PC-9 (cell line): ENCODE measurements at regions of chr1 and their contacts with region 1.

Region 1: GRCh38 chr1:31564134-31564989 is 12.0 kb upstream of the TINAGL1 start:
- DNase-seq: peak; percentile 64 to 67
- H3K4me3 ChIP-seq: no peak overlapping the region
- H3K27ac ChIP-seq: peak overlapping the region; percentile 93
- H3K4me1 ChIP-seq: peaks cover 44% of the 10 kb centered on the region
- H3K27me3 ChIP-seq: no peaks in the 10 kb centered on the region
- CTCF ChIP-seq: peak; percentile 100

Region 2: GRCh38 chr1:31576201-31576669 is 11.9 kb after region 1 on chr1 and contains the start of gene TINAGL1:
- CTCF ChIA-PET with region 1: no interaction called
- POLR2A ChIA-PET with region 1: interaction called, 5 read pairs
- intact Hi-C with region 1: loop called (anchors 1 kb)
- DNase-seq: peak; percentile 89 to 98
- H3K4me3 ChIP-seq: peak within 1 kb of the TSS; percentile 70
- H3K27ac ChIP-seq: peak within 1 kb of the TSS; percentile 91
- H3K4me1 ChIP-seq: peaks cover 72% of the 10 kb centered on the region
- H3K27me3 ChIP-seq: no peaks in the 10 kb centered on the region
- CTCF ChIP-seq: no peak
- total RNA-seq, gene TINAGL1: 162 and 191 TPM in 2 replicates

Region 3: GRCh38 chr1:31587720-31588394 is 23.5 kb after region 1 on chr1:
- CTCF ChIA-PET with region 1: interaction called, 3 read pairs
- POLR2A ChIA-PET with region 1: interaction called, 3 read pairs
- intact Hi-C with region 1: loop called (anchors 1 kb)
- DNase-seq: peak; percentile 84 to 95
- H3K4me3 ChIP-seq: peak overlapping the region; percentile 52; the same call in 1 of the 2 replicates
- H3K27ac ChIP-seq: peak overlapping the region; percentile 92
- H3K4me1 ChIP-seq: peaks cover 97% of the 10 kb centered on the region
- H3K27me3 ChIP-seq: no peaks in the 10 kb centered on the region
- CTCF ChIP-seq: peak; percentile 90

Region 4: GRCh38 chr1:31593770-31594632 is 29.6 kb after region 1 on chr1:
- CTCF ChIA-PET with region 1: interaction called, 3 read pairs
- POLR2A ChIA-PET with region 1: interaction called, 15 read pairs
- intact Hi-C with region 1: loop called (anchors 1 kb)
- DNase-seq: peak; percentile 81 to 85
- H3K4me3 ChIP-seq: no peak overlapping the region
- H3K27ac ChIP-seq: no peak overlapping the region
- H3K4me1 ChIP-seq: peaks cover 41% of the 10 kb centered on the region
- H3K27me3 ChIP-seq: no peaks in the 10 kb centered on the region
- CTCF ChIP-seq: peak; percentile 99

Region 5: GRCh38 chr1:31617917-31618660 is 53.7 kb after region 1 on chr1:
- CTCF ChIA-PET with region 1: no interaction called
- POLR2A ChIA-PET with region 1: no interaction called
- intact Hi-C with region 1: loop called (anchors 1 kb)
- DNase-seq: peak in 1 of 2 experiments; percentile 43
- H3K4me3 ChIP-seq: peak overlapping the region; percentile 75
- H3K27ac ChIP-seq: no peak overlapping the region
- H3K4me1 ChIP-seq: no peaks in the 10 kb centered on the region
- H3K27me3 ChIP-seq: no peaks in the 10 kb centered on the region
- CTCF ChIP-seq: peak; percentile 98

Region 6: DNA sequence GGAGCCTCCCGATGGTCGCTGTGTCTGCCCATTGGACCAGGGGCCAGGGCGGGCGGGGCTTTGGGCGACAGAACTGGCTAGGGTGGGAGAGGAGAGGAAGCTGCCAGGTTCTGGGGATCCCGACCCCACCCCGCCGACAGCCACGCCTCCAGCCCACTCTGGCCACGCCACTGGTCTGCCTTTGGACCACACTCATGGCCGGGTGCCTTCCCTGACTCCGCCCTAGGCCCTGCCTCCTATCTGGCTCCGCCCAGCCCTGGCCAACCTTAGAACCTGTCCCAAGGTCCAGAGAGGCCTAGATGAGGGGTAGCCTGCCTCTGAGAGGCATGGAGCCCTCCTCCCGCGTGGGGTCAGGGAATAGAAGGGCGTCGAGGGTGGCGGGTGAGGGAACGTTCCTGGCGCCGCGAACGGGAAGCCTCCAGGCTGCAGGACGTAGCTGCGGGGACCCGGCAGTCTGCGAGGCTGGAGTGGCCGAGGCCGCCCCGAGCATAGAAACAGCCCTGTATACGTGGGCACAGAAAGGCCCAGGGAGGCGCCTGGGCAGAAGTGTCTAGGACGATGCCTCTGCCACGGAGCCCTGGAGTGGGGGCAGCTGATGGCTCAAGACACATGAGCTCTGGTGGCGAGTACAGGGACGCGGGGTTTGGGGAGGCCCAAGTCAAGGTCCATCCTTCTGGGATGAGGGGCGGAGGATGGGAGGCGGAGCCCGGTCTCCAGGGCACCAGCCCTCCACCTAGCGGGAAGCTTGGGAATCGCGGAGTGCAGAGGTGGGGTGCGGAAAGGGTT is 150.9 kb after region 1 on chr1:
- CTCF ChIA-PET with region 1: no interaction called
- POLR2A ChIA-PET with region 1: no interaction called
- intact Hi-C with region 1: loop called (anchors 10 kb)
- DNase-seq: peak; percentile 90 to 93
- H3K4me3 ChIP-seq: peak overlapping the region; percentile 59
- H3K27ac ChIP-seq: no peak overlapping the region
- H3K4me1 ChIP-seq: peaks cover 45% of the 10 kb centered on the region
- H3K27me3 ChIP-seq: peaks cover 7% of the 10 kb centered on the region; the same call in 1 of the 2 replicates
- CTCF ChIP-seq: peak; percentile 98

Region 7: GRCh38 chr1:32128479-32128878 is 564.1 kb after region 1 on chr1:
- CTCF ChIA-PET with region 1: no interaction called
- POLR2A ChIA-PET with region 1: interaction called, 22 read pairs
- intact Hi-C with region 1: no loop called
- DNase-seq: no peak
- H3K4me3 ChIP-seq: no peak overlapping the region
- H3K27ac ChIP-seq: no peak overlapping the region
- H3K4me1 ChIP-seq: peaks cover 11% of the 10 kb centered on the region; the same call in 1 of the 2 replicates
- H3K27me3 ChIP-seq: no peaks in the 10 kb centered on the region
- CTCF ChIP-seq: no peak